AG04450 (cell line): ENCODE measurements at regions of chr5 and their contacts with region 1.

Region 1: DNA sequence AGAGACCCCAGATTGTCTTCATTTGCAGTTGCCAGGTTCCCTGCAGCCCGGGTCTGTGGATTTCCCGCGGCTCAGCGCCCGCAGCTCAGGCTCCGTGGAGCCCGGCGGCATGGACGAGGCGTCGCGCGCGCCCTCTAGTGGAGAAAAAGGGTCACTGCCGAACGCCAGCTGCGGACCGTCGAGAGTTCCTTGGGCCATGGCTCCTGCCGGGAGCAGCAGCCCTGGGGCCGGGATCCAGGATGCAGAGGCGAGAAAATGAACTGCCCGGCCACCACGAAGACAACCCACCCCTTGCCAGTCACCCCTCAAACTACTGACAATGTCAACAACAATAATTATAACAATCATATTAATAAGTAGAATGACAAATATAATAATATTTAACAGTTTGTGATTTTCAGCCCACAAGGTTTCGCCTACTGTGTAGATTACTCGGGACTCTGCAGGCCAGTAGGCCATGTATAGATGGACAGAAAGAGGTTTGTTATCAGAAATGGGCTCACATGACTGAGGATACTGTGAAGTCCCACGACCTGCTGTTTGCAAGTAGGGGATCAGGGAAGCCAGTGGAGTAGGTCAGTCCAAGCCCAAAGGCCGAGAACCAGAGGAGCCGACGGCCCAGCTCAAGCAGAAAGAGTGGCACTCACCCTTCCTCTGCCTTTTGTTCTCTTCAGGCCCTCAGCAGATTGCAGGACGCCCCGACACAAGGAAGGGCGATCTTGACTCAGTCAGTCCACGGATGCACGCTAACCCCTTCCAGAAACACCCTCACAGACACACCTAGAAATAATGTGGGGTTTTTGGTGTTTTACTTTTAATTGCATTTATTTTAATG is 43.1 kb downstream of the BOD1 start:
- DNase-seq: no peak
- H3K4me3 ChIP-seq: no peak overlapping the region
- H3K27ac ChIP-seq: no peak overlapping the region
- H3K27me3 ChIP-seq: no peaks in the 10 kb centered on the region
- CTCF ChIP-seq: peak; percentile 93

Region 2: GRCh38 chr5:173293817-173294672 is 279.3 kb before region 1 on chr5:
- CTCF ChIA-PET with region 1: interaction called, 114 read pairs
- POLR2A ChIA-PET with region 1: no interaction called
- DNase-seq: peak; percentile 55
- H3K4me3 ChIP-seq: peak overlapping the region; percentile 15; the same call in 1 of the 2 replicates
- H3K27ac ChIP-seq: no peak overlapping the region
- H3K27me3 ChIP-seq: peaks cover 4% of the 10 kb centered on the region
- CTCF ChIP-seq: peak; percentile 88

Region 3: GRCh38 chr5:173331956-173332479 is 241.3 kb before region 1 on chr5:
- CTCF ChIA-PET with region 1: interaction called, 31 read pairs
- POLR2A ChIA-PET with region 1: interaction called, 3 read pairs
- DNase-seq: no peak
- H3K4me3 ChIP-seq: no peak overlapping the region
- H3K27ac ChIP-seq: no peak overlapping the region
- H3K27me3 ChIP-seq: no peaks in the 10 kb centered on the region
- CTCF ChIP-seq: peak; percentile 90

Region 4: DNA sequence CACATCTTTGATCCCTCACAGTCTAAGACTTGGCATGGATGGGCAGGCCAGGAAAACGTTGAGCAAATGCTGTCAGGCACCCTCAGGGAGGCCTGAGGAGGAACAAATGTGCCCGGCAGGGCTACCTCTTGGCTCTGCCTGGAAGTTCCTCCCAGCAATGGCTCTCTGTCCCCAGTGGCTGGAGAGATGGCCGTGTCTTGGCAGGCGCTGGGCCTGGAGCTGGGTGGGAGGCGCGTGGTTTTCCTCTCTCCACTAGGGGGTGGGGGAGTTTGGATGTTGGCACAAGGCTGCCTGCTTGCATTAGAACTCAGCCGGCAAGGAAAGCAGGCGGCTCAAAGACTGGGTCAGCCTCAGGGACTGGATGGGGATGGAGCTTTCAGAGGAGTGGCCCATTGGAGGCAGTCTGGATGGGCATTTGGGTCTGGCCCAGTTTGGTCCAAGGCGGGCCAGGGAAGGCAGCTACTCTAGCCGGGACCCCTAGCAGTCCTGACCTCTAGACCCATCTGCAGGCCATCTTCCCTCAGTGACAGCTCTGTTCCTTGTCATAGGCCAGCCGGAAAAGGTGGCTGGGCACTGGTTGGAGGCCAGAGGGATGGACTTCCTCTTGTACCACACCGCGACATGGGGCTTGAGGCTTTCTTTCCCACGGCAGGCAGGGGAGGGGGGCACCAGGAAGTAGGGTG is 176.9 kb before region 1 on chr5:
- CTCF ChIA-PET with region 1: interaction called, 10 read pairs
- POLR2A ChIA-PET with region 1: no interaction called
- DNase-seq: no peak
- H3K4me3 ChIP-seq: no peak overlapping the region
- H3K27ac ChIP-seq: no peak overlapping the region
- H3K27me3 ChIP-seq: no peaks in the 10 kb centered on the region
- CTCF ChIP-seq: peak; percentile 37

Region 5: DNA sequence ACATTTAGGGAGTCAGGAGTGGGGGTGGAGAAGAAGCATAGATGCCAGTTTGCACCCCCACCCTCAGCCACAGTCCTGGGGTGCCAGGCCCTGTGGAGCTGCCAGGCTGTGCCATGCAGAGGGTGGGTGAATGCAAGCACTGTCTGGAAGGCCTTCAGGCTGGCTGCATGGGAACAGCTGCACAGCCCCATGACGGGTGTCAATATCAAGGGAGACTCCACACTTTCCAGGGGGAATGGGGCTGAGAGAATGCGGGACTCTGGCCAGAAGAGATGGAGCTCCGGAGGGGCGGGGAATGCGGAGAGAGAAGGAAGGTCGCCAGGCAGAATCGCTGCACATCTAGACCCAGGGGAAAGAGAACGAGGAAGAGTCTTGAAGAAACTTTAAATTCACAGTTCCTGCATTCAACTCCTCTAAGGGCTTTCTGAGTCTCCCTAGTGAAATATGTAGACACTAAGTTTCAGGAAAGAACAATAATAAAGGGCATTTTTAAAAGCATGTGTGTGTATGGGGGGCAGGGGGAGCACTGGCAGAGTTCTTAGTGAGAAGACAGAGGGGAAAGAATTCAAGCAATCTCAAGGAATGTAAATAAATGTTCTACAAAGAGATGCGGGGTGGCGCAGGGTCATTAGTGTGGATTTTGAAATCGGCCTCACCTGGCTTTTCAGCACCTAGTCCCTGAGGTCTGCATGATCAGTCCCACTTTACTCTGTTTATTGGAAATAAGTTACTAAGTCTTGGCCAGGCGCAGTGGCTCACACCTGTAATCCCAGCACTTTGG is 16.0 kb before region 1 on chr5:
- CTCF ChIA-PET with region 1: interaction called, 17 read pairs
- POLR2A ChIA-PET with region 1: no interaction called
- DNase-seq: no peak
- H3K4me3 ChIP-seq: no peak overlapping the region
- H3K27ac ChIP-seq: peak overlapping the region; percentile 21
- H3K27me3 ChIP-seq: no peaks in the 10 kb centered on the region
- CTCF ChIP-seq: no peak

Region 6: DNA sequence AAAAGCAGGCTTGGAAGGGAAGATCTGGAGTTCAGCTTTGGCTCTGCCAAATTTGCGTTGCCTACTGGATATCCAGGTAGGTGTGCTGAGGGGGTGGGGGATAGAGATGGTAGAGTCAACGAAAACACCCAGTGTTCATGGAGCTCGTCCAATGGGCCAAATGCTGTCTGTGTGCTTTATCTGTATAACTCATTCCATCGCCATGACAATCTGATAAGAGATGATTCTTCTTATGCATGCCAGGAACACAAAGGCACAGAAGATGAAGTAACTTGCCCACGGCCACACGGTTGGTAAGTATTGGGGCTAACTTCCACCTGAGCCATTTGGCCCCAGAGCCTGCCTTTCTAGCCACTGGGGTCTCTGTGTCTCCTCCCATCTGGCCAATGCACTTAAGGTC is 10.1 kb before region 1 on chr5:
- CTCF ChIA-PET with region 1: interaction called, 17 read pairs
- POLR2A ChIA-PET with region 1: no interaction called
- DNase-seq: no peak
- H3K4me3 ChIP-seq: no peak overlapping the region
- H3K27ac ChIP-seq: no peak overlapping the region
- H3K27me3 ChIP-seq: no peaks in the 10 kb centered on the region
- CTCF ChIP-seq: no peak